HCT116 (cell line): ENCODE measurements at regions of chr17 and their contacts with region 1.

Region 1: DNA sequence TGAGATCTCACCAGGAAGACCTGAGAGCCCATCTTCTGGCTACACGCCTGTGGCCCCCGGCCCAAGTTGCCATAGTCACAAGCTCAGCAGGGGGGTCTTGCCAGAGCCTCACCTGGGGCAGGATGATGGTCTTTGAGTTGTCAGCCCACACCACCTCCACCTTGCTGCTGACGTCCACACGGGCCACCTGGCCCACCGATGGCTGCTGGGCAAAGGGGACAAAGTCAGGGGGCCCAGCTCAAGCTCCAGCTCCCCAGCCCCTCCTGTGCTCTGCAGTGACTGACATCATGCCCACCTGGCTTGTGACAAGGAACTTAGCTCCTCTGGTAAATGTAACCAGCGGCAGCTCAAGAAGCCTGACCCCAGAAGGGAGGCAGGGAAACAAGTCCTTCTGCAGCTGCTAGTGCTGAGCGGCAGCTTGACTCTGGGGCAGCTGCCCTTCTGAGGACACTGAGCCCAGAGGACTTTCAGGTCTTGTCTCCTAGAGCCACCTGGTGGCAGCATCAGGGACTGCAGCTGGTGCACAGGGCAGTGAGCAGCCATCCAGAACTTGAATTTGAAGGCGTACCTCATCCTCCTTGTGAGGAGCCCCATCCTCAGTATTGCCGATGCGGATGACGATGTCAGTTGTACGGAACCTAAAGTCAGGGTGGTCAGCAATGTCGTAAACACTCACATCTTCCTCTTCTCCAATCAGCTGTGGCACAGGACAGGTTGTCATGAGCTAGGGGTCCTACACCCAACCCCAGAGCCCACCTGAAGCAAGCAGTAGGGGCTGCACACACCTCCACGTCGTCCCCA is 13.5 kb downstream of the SPHK1 start:
- DNase-seq: peak; percentile 68
- ATAC-seq: peak; percentile 91
- H3K4me3 ChIP-seq: no peak overlapping the region
- H3K27ac ChIP-seq: no peak overlapping the region
- H3K4me1 ChIP-seq: no peaks in the 10 kb centered on the region
- H3K27me3 ChIP-seq: no peaks in the 10 kb centered on the region
- CTCF ChIP-seq: peak; percentile 87 to 100 (median 99)
- POLR2A ChIP-seq: no peak
- RAD21 ChIP-seq: peak; percentile 90

Region 2: DNA sequence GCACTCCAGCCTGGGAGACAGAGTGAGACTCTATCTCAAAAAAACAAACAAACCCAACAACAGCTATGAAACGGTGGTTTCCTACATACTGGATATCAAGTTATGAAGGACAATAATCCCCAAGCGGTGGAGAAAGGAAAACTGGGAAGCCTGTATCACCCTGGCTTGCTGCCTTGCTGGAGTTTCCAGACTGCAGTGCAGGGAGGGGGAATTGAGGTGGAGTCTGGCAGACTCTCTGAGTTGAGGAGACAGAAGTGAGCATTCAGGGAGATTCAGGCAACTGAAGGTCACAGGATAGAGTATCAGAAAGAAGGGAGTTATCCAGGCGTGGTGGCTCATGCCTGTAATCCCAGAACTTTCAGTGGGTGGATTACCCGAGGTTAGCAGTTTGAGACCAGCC is 101.7 kb before region 1 on chr17:
- CTCF ChIA-PET with region 1: interaction called, 55 read pairs
- POLR2A ChIA-PET with region 1: interaction called, 3 read pairs
- RAD21 ChIA-PET with region 1: no interaction called
- intact Hi-C with region 1: no loop called
- DNase-seq: no peak
- ATAC-seq: no peak
- H3K4me3 ChIP-seq: no peak overlapping the region
- H3K27ac ChIP-seq: no peak overlapping the region
- H3K4me1 ChIP-seq: no peaks in the 10 kb centered on the region
- H3K27me3 ChIP-seq: no peaks in the 10 kb centered on the region
- CTCF ChIP-seq: no peak
- POLR2A ChIP-seq: no peak
- RAD21 ChIP-seq: no peak

Region 3: GRCh38 chr17:76341301-76341700 is 56.6 kb before region 1 on chr17:
- CTCF ChIA-PET with region 1: no interaction called
- POLR2A ChIA-PET with region 1: no interaction called
- RAD21 ChIA-PET with region 1: no interaction called
- intact Hi-C with region 1: no loop called
- DNase-seq: no peak
- ATAC-seq: no peak
- H3K4me3 ChIP-seq: no peak overlapping the region
- H3K27ac ChIP-seq: no peak overlapping the region
- H3K4me1 ChIP-seq: no peaks in the 10 kb centered on the region
- H3K27me3 ChIP-seq: no peaks in the 10 kb centered on the region
- CTCF ChIP-seq: no peak
- POLR2A ChIP-seq: no peak
- RAD21 ChIP-seq: no peak

Region 4: GRCh38 chr17:76353599-76354316 is 44.1 kb before region 1 on chr17 and contains the start of gene PRPSAP1:
- CTCF ChIA-PET with region 1: interaction called, 11 read pairs
- POLR2A ChIA-PET with region 1: interaction called, 4 read pairs
- RAD21 ChIA-PET with region 1: interaction called in 1 of 2 experiments, 4 read pairs
- intact Hi-C with region 1: no loop called
- DNase-seq: peak; percentile 93
- ATAC-seq: peak; percentile 96
- H3K4me3 ChIP-seq: peak within 1 kb of the TSS; percentile 93 to 99
- H3K27ac ChIP-seq: peak within 1 kb of the TSS; percentile 89
- H3K4me1 ChIP-seq: peaks cover 0 to 23% of the 10 kb centered on the region in 2 experiments; a peak in 2 of 4 replicates
- H3K27me3 ChIP-seq: no peaks in the 10 kb centered on the region
- CTCF ChIP-seq: peak in 1 of 3 experiments; percentile 62; a peak in 2 of 6 replicates
- POLR2A ChIP-seq: peak; percentile 97
- RAD21 ChIP-seq: no peak; the same call in 1 of the 2 replicates
- total RNA-seq, gene PRPSAP1: 81.4 TPM

Region 5: GRCh38 chr17:76370261-76370993 is 27.5 kb before region 1 on chr17:
- CTCF ChIA-PET with region 1: interaction called, 64 read pairs
- POLR2A ChIA-PET with region 1: no interaction called
- RAD21 ChIA-PET with region 1: interaction called, 3 to 9 read pairs
- intact Hi-C with region 1: loop called (anchors 2 kb)
- DNase-seq: no peak
- ATAC-seq: peak; percentile 83
- H3K4me3 ChIP-seq: no peak overlapping the region
- H3K27ac ChIP-seq: no peak overlapping the region
- H3K4me1 ChIP-seq: peaks cover 7 to 27% of the 10 kb centered on the region in 2 experiments; a peak in 3 of 4 replicates
- H3K27me3 ChIP-seq: no peaks in the 10 kb centered on the region
- CTCF ChIP-seq: peak; percentile 80 to 99 (median 97)
- POLR2A ChIP-seq: no peak
- RAD21 ChIP-seq: peak; percentile 43

Region 6: GRCh38 chr17:76408052-76408849 is 10.4 kb after region 1 on chr17:
- CTCF ChIA-PET with region 1: interaction called, 22 read pairs
- POLR2A ChIA-PET with region 1: no interaction called
- RAD21 ChIA-PET with region 1: no interaction called
- intact Hi-C with region 1: no loop called
- DNase-seq: peak; percentile 42
- ATAC-seq: peak; percentile 92
- H3K4me3 ChIP-seq: no peak overlapping the region
- H3K27ac ChIP-seq: no peak overlapping the region
- H3K4me1 ChIP-seq: peaks cover 0 to 5% of the 10 kb centered on the region in 2 experiments; a peak in 2 of 4 replicates
- H3K27me3 ChIP-seq: no peaks in the 10 kb centered on the region
- CTCF ChIP-seq: peak; percentile 94 to 100 (median 100)
- POLR2A ChIP-seq: no peak
- RAD21 ChIP-seq: peak; percentile 93

Region 7: DNA sequence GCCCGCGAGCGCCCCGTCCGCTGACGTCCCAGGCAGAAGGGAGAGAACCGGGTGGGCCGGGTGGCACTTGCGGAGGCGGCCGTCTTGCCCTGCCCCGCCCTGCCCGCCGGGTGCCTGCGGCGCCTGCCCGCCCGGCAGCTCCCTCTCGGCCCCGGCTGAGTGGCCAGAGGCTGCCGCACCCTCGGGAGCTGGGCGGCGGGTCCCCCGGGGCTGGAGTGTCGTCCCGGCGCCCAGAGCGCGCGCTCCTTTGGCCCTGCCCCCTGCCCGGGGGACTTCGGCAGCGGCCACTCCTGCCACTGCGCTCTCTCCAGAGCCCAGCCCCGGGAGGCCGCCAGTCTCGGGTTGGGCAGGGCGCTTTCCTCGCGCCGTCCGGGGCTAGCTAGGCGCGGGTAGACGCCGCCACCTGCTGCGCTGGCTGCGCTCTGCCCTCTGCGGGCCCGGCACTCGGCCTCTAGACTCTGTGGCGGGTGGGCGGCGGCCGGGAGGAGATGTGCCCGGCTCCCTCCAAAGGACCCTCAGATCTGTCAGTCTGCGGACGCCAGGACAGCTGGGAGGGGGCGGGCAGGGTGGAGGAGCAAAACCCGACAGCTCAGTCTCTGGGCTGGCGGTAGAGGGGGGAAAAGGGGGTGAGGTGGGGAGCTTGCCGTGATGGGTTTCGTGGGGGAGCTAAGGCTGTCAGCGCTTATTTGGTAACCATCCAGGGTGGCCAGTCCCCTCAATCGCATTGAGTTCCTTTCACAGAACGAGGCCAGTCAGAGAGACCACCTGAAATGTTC is 188.1 kb after region 1 on chr17 and contains the start of gene ST6GALNAC2:
- CTCF ChIA-PET with region 1: no interaction called
- POLR2A ChIA-PET with region 1: no interaction called
- RAD21 ChIA-PET with region 1: no interaction called
- intact Hi-C with region 1: no loop called
- DNase-seq: peak; percentile 42
- ATAC-seq: peak; percentile 89
- H3K4me3 ChIP-seq: peak within 1 kb of the TSS; percentile 68 to 87
- H3K27ac ChIP-seq: peak within 1 kb of the TSS; percentile 80
- H3K4me1 ChIP-seq: peaks cover 17 to 40% of the 10 kb centered on the region in 2 experiments
- H3K27me3 ChIP-seq: no peaks in the 10 kb centered on the region
- CTCF ChIP-seq: peak in 2 of 3 experiments; percentile 12 to 23; a peak in 1 of 6 replicates
- POLR2A ChIP-seq: no peak
- RAD21 ChIP-seq: peak; percentile 59
- total RNA-seq, gene ST6GALNAC2: 14.7 TPM